ENCODE measurements at regions of chr9 and their contacts with region 1.

Region 1: DNA sequence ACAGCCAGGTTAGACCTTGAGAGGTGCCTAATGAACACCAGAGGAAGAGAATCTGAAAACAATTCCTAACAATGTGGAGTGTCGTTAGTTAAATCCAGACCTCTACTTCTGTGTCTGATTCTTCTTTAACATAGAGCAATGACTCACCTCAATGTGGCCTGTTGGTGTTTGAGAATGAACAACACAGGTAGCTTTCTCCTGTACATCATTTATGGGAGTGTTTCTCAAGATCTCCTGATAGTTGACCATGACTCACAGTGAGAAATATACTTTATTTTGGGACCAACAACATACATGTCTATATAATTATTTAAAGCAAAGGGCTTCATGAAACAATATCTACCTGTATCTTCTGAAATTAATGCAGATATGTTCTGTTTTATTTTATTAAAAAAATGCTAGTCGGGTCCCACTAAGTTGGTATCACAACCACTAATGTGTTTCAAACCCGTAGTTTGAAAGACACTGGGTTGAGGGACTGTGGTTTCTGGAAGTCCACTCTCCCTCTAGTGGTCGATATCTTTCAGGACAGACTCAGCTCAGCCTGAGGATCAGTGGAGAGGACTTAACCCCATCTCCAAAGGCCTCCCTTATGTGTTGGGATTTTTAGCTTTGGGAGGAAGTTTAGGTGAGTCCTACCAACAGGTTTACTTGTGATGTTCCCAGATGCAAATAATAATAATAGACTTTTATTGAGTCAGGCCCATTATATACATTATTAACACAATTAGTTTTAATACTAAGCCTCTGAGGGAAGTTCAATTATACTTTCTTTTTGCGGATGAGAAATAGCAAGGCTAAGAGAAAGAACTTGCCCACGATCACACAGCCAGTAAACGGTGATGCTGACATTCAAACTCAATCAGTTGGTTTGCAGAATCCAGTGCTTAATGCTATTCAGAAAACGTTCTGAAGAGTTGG is 70.0 kb upstream of the KLF9 start:
- DNase-seq: no peak
- H3K4me3 ChIP-seq: no peak overlapping the region
- H3K27ac ChIP-seq: peak overlapping the region; percentile 15
- H3K4me1 ChIP-seq: peaks cover 85% of the 10 kb centered on the region
- H3K27me3 ChIP-seq: no peaks in the 10 kb centered on the region
- CTCF ChIP-seq: peak; percentile 24 to 76 (median 25)
- POLR2A ChIP-seq: no peak

Region 2: DNA sequence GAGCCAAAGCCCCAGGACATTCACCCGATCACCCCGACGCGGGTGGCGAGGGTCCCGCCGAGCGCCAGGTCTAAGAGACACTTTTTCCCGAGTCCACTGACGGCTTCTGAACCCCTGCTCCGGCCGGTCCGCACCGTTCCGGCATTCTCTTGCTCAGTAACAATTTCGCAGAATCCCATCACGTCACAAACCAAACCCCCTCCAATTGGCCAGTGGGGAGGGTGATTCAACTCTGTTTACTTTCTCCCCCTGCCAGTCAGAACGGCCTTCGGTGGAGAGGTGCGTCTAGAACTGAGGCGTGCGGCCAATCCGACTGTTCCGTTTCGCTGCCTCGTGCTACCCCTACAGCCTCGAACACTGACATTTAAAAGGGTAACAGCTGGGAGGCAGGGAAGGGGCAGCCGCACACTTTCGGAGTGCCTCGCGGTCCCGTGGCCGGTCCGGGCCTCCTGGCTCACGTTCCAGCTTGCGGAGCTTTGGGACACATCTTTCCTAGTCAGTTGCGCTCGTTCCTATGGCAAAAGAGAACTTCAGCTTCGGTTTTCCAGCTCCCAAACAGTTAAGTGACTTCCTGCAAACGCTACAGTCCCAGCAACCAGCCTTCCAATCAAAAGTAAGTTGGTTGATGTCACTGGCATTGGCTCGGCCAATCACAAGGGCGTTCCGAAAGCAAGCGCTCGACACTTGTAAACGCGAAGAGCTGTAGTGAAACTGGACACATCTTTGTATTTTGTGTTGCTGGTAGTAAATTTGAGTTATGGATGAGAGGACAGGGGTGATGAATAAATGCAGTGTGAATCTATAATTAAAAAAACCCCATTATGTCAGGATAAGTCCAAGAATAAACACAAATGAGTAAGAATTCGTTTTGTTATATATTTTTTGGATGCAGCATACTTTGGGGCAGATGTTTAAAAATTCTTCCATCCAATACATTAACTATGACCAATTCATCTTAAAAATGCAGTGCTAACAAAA is 70.4 kb before region 1 on chr9 and contains the start of gene KLF9:
- intact Hi-C with region 1: loop called (anchors 2 kb)
- DNase-seq: peak; percentile 99 to 100
- H3K4me3 ChIP-seq: peak within 1 kb of the TSS; percentile 65 to 91
- H3K27ac ChIP-seq: peak within 1 kb of the TSS; percentile 100
- H3K4me1 ChIP-seq: peaks cover 57% of the 10 kb centered on the region
- H3K27me3 ChIP-seq: no peaks in the 10 kb centered on the region
- CTCF ChIP-seq: no peak
- POLR2A ChIP-seq: peak in 1 of 2 donors; percentile 95
- total RNA-seq, gene KLF9: 98.5 TPM

Region 3: GRCh38 chr9:70419546-70420266 is 64.8 kb before region 1 on chr9:
- intact Hi-C with region 1: loop called (anchors 1 kb)
- DNase-seq: peak in 1 of 2 donors; percentile 99
- H3K4me3 ChIP-seq: peak overlapping the region; percentile 56 to 71
- H3K27ac ChIP-seq: peak overlapping the region; percentile 100
- H3K4me1 ChIP-seq: peaks cover 54% of the 10 kb centered on the region
- H3K27me3 ChIP-seq: no peaks in the 10 kb centered on the region
- CTCF ChIP-seq: no peak
- POLR2A ChIP-seq: peak in 1 of 2 donors; percentile 73

Region 4: DNA sequence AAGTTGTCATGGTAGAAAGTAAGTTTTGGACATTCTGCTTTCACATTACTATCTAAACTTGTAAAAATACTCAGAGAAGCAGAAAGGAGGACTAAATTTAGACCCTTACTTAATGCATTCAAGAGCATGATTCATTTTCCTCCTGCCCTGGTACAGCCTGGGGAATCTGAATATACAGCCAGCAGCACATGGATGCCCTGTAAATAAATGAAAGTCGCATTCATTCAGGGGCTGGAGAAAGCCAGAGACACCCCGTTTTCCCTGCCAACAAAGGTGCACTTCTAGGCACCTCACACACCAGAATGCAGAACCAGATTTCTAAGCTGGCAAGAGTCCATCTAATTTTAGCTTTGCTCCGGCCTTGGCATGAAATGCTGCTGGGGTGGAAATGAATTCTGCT is 102.7 kb after region 1 on chr9:
- intact Hi-C with region 1: loop called (anchors 5 kb)
- DNase-seq: peak in 1 of 2 donors; percentile 83
- H3K4me3 ChIP-seq: no peak overlapping the region
- H3K27ac ChIP-seq: peak overlapping the region; percentile 79
- H3K4me1 ChIP-seq: peaks cover 58% of the 10 kb centered on the region
- H3K27me3 ChIP-seq: no peaks in the 10 kb centered on the region
- CTCF ChIP-seq: no peak
- POLR2A ChIP-seq: no peak

Region 5: DNA sequence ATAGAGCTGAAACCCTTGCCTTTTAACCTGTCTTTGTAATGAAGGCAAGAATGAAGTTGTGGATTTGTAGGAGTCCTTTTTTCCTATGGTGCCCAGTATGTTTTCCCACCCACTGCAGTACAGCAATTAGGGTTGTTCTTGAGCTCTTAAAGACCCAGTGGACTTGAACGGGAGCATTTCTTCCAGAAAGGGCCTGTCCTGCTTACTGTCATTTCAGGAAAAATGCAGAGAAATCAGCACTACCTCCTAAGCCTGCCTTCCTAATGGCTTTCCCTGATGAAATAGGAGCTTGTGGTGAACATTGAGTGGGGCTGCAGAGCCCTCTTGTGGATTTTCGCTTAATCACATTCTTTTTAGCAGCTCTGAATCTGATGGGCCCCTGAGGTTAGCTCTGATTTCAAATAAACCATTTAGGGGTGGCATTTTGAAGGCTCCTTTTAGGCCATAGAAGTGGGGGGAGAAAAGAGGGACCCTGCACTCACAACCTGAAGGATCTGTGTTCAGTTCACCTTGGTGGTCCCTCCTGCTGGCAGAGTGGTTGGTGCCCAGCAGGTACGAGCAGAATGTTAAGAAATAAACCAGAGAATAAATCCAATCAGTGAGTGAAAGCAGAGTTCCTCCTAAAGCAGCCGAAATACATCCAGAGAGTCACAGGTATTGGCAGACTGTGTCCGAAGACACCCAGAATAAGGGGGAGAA is 118.0 kb after region 1 on chr9:
- intact Hi-C with region 1: loop called (anchors 2 kb)
- DNase-seq: no peak
- H3K4me3 ChIP-seq: peak overlapping the region in 1 of 2 donors; percentile 19
- H3K27ac ChIP-seq: peak overlapping the region; percentile 89
- H3K4me1 ChIP-seq: peaks cover 31% of the 10 kb centered on the region
- H3K27me3 ChIP-seq: no peaks in the 10 kb centered on the region
- CTCF ChIP-seq: peak in 2 of 3 experiments; percentile 78 to 93
- POLR2A ChIP-seq: no peak

Region 6: DNA sequence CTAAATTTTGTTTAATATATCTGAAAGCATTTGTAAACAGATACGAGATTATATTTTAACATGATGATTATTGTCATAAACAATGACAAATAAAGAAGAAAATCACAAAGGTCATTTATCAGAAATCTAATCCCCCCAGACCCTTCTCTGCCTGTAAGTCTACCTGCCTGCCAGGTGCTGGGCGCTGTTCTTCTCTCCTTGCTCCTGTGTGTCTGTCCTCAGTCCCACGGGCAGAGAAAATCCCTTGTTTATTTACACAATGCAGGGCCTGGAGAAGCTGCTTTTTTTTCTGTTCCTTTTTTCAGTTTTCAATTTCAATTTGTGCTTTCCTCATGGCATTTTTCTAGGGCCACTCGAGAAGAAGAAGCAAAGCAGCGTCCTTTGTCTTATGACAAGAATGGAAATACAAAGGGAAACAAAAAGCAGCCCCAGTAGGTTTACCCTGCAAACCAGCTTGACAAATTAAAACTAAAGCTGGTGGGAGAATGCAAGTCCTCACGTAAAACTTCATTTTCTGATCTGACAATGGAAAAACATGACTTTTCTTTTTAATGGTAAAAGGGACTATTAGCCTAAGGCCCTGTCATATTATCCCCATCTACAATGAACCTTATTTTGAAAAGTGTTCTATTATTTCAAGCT is 212.3 kb after region 1 on chr9:
- intact Hi-C with region 1: no loop called
- DNase-seq: no peak
- H3K4me3 ChIP-seq: no peak overlapping the region
- H3K27ac ChIP-seq: no peak overlapping the region
- H3K4me1 ChIP-seq: no peaks in the 10 kb centered on the region
- H3K27me3 ChIP-seq: no peaks in the 10 kb centered on the region
- CTCF ChIP-seq: no peak
- POLR2A ChIP-seq: no peak